ENCODE measurements at regions of chr2 and their contacts with region 1.

Region 1: GRCh38 chr2:68185541-68186164 is 28.0 kb downstream of the PNO1 start:
- DNase-seq: peak; percentile 75
- ATAC-seq: no peak
- H3K4me3 Mint-ChIP-seq: no peak overlapping the region
- H3K27ac Mint-ChIP-seq: peak overlapping the region; percentile 1
- H3K4me1 Mint-ChIP-seq: peaks cover 22% of the 10 kb centered on the region
- H3K27me3 Mint-ChIP-seq: no peaks in the 10 kb centered on the region
- CTCF ChIP-seq: peak; percentile 88

Region 2: DNA sequence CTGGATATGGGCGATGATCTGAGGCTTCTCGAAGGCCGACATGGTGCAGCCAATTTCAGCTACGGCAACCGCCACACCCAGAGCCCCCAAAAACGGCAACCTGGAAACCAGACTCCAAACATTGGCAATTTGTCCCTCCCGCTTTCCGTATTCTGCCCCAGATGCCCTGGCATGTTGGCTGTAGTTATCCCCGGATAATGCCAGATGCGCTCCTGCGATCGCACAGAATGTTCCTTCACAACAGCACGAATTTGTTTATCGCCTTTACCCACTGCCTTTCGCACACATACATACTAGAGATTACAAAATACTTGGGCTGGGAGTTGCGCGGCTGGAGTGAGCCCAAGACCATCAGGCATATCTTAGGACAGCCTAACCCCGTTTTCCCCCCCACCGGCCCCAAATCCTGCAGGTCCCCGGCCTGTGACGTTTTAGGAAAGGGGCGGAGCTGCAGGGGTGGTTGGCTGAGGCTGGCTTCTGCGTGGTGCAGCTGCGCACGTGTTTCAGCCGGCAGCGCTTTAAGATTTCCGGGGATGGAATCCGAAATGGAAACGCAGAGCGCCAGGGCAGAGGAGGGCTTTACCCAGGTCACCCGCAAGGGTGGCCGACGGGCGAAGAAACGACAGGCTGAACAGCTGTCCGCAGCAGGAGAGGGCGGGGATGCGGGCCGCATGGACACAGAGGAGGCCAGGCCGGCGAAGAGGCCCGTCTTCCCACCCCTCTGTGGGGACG is 28.1 kb before region 1 on chr2 and contains the start of gene PNO1:
- CTCF ChIA-PET with region 1: interaction called, 15 read pairs
- POLR2A ChIA-PET with region 1: interaction called, 12 read pairs
- intact Hi-C with region 1: no loop called
- DNase-seq: peak; percentile 98
- ATAC-seq: peak; percentile 96
- H3K4me3 Mint-ChIP-seq: peak within 1 kb of the TSS; percentile 97
- H3K27ac Mint-ChIP-seq: peak within 1 kb of the TSS; percentile 100
- H3K4me1 Mint-ChIP-seq: peaks cover 46% of the 10 kb centered on the region
- H3K27me3 Mint-ChIP-seq: no peaks in the 10 kb centered on the region
- CTCF ChIP-seq: no peak
- total RNA-seq, gene PNO1: 25.1 to 26.2 TPM

Region 3: GRCh38 chr2:68169297-68169696 is 16.4 kb before region 1 on chr2:
- CTCF ChIA-PET with region 1: interaction called, 34 read pairs
- POLR2A ChIA-PET with region 1: interaction called, 4 read pairs
- intact Hi-C with region 1: no loop called
- DNase-seq: no peak
- ATAC-seq: no peak
- H3K4me3 Mint-ChIP-seq: no peak overlapping the region
- H3K27ac Mint-ChIP-seq: no peak overlapping the region
- H3K4me1 Mint-ChIP-seq: peaks cover 11% of the 10 kb centered on the region
- H3K27me3 Mint-ChIP-seq: no peaks in the 10 kb centered on the region
- CTCF ChIP-seq: no peak

Region 4: DNA sequence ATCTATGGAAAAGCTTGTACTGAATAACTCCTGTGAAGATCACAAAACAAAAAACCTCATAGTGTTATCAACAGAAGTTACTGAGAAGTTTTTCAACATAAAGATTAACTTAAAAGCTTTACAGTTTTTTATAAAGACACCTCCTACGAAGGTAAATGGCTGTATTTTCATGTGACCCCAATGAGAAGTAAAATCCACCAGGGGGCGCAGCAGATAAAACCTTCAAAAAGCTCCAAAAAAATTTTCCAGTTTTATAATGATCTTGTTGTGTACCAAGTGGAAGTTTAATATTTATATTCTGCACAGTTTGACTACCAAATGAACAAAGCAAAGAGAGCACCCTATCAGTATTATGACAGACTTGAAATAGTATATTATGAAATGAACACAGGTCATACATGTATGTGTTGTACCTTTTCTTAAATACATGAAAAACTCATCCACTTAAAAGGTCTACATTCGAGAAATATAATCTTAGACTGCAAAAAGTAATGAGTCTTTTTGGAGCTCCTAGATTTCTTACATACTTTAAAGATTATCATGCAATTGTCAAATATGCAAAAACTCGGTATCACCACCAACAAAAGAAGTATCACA is 10.6 kb after region 1 on chr2:
- CTCF ChIA-PET with region 1: interaction called, 35 read pairs
- POLR2A ChIA-PET with region 1: interaction called, 3 read pairs
- intact Hi-C with region 1: no loop called
- DNase-seq: peak; percentile 58
- ATAC-seq: no peak
- H3K4me3 Mint-ChIP-seq: no peak overlapping the region
- H3K27ac Mint-ChIP-seq: no peak overlapping the region
- H3K4me1 Mint-ChIP-seq: peaks cover 61% of the 10 kb centered on the region
- H3K27me3 Mint-ChIP-seq: no peaks in the 10 kb centered on the region
- CTCF ChIP-seq: peak; percentile 74

Region 5: GRCh38 chr2:68203587-68203986 is 17.9 kb after region 1 on chr2:
- CTCF ChIA-PET with region 1: interaction called, 17 read pairs
- POLR2A ChIA-PET with region 1: no interaction called
- intact Hi-C with region 1: no loop called
- DNase-seq: no peak
- ATAC-seq: peak; percentile 87
- H3K4me3 Mint-ChIP-seq: peak overlapping the region; percentile 22
- H3K27ac Mint-ChIP-seq: peak overlapping the region; percentile 89
- H3K4me1 Mint-ChIP-seq: peaks cover 72% of the 10 kb centered on the region
- H3K27me3 Mint-ChIP-seq: no peaks in the 10 kb centered on the region
- CTCF ChIP-seq: no peak

Region 6: GRCh38 chr2:68403199-68403644 is 217.6 kb after region 1 on chr2:
- CTCF ChIA-PET with region 1: no interaction called
- POLR2A ChIA-PET with region 1: no interaction called
- intact Hi-C with region 1: no loop called
- DNase-seq: no peak
- ATAC-seq: no peak
- H3K4me3 Mint-ChIP-seq: no peak overlapping the region
- H3K27ac Mint-ChIP-seq: no peak overlapping the region
- H3K4me1 Mint-ChIP-seq: peaks cover 6% of the 10 kb centered on the region
- H3K27me3 Mint-ChIP-seq: peaks cover 6% of the 10 kb centered on the region
- CTCF ChIP-seq: no peak